ENCODE measurements at regions of chr13 and their contacts with region 1.

Region 1: DNA sequence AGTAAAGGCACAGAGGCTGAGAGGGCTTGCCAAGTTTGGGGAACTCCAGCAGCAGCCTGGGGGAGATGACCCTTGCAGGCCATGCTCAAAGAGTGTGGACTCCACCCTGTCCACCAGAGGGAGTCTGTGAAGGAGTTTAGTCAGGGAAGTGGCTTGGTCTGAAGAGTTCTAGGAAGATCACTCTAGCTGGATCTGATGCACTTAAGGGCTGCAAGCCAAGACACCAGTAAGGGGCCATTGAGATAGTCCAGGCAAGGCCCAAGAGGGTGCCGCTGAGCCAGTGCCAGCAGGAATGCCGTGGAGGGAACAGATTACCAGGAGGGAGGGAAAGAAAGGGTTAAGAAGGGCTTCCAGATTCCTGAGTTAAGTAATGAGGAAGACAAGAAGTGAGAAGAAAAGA is 68.7 kb downstream of the ZAR1L start:
- DNase-seq: no peak
- H3K4me3 ChIP-seq: no peak overlapping the region
- H3K27ac ChIP-seq: no peak overlapping the region
- H3K27me3 ChIP-seq: no peaks in the 10 kb centered on the region
- CTCF ChIP-seq: peak; percentile 83

Region 2: DNA sequence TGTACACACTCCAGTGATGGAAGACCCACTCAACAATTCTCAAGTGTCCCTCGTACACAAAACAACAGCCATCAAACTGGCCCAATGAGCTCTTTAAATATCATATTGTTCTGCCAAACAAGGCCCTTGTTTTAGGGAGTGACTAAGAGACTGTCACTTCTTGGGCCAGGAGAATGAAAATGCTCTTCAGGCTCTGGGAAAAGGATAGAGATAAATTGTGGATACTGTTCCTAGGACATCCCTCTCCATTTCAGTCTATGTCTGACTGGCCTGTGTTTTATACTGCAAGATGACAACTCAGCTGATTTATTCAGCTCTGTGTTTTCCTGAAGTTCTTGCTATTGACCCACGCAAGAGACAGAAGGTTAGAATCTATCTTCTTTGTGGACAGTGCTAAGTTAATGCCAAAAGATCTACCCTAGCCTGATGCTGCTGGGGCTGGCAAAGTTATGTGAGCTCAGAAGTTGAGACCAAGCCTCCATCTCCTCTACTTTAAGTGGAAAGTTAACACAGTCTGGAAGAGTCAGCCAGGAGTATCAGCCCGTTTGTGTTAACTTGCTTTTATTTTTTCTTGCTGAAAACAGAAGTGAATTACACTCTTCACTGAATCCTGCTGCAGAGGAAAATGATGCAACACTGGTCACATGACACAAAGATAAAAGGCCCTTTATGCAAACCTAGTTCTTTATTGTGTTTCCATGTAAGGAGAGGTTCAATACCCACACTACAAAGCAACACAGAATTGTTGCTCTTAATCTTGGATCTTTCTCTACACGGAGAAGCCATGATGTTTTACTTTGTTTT is 200.3 kb before region 1 on chr13:
- CTCF ChIA-PET with region 1: no interaction called
- POLR2A ChIA-PET with region 1: no interaction called
- DNase-seq: no peak
- H3K4me3 ChIP-seq: no peak overlapping the region
- H3K27ac ChIP-seq: no peak overlapping the region
- H3K27me3 ChIP-seq: no peaks in the 10 kb centered on the region
- CTCF ChIP-seq: no peak

Region 3: GRCh38 chr13:32228330-32229041 is 18.0 kb before region 1 on chr13:
- CTCF ChIA-PET with region 1: interaction called, 11 read pairs
- POLR2A ChIA-PET with region 1: no interaction called
- DNase-seq: peak; percentile 46
- H3K4me3 ChIP-seq: no peak overlapping the region
- H3K27ac ChIP-seq: peak overlapping the region; percentile 40
- H3K27me3 ChIP-seq: no peaks in the 10 kb centered on the region
- CTCF ChIP-seq: peak; percentile 14; the same call in 1 of the 2 replicates

Region 4: GRCh38 chr13:32234932-32235331 is 11.5 kb before region 1 on chr13:
- CTCF ChIA-PET with region 1: interaction called, 37 read pairs
- POLR2A ChIA-PET with region 1: interaction called, 5 read pairs
- DNase-seq: no peak
- H3K4me3 ChIP-seq: no peak overlapping the region
- H3K27ac ChIP-seq: no peak overlapping the region
- H3K27me3 ChIP-seq: no peaks in the 10 kb centered on the region
- CTCF ChIP-seq: no peak

Region 5: GRCh38 chr13:32310134-32310706 is 63.8 kb after region 1 on chr13:
- CTCF ChIA-PET with region 1: interaction called, 15 read pairs
- POLR2A ChIA-PET with region 1: no interaction called
- DNase-seq: peak; percentile 41
- H3K4me3 ChIP-seq: no peak overlapping the region
- H3K27ac ChIP-seq: no peak overlapping the region
- H3K27me3 ChIP-seq: no peaks in the 10 kb centered on the region
- CTCF ChIP-seq: peak; percentile 71

Measured in AG04450 (cell line).